ENCODE measurements at regions of chr2 and their contacts with region 1.

Region 1: DNA sequence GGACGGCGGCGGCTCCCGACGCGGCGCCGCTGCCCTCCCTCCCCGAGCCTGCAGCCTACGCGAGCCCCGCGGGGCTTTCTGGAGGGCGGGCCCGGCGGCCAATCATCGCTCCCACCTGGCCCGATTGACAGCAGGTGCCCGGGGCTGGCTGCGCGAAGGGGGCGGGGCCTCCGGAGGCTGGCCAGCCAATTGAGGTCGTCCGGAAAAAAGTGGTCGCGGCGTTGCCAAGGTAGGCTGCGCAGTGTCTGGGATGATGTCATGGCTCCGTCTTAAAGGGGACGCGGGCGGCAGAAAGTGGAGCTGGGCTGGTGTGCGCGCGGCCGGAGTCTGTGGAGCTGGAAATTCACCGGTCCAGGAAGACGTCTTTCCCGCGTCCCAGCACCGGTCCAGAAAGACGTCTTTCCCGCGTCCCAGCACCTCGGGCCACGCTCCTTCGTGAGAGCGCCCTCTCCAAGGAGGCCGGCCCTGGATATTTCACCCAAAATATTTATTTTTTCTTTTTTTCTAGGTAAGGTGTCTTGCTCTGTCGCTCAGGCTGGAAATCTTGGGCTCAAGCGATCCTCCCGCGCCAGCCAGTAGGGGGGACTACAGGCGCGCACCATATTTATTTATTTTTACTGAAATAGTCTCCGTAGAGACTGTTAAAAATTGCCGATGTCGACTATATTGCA is at the start of gene ACTR1B:
- DNase-seq: peak; percentile 98 to 99
- ATAC-seq: peak; percentile 82 to 96 (median 90)
- H3K4me3 ChIP-seq: peak within 1 kb of the TSS; percentile 93
- H3K4me3 Mint-ChIP-seq: peak within 1 kb of the TSS; percentile 93
- H3K27ac ChIP-seq: peak within 1 kb of the TSS; percentile 99
- H3K27ac Mint-ChIP-seq: peak within 1 kb of the TSS; percentile 95 to 97
- H3K4me1 ChIP-seq: peaks cover 36% of the 10 kb centered on the region
- H3K4me1 Mint-ChIP-seq: peaks cover 29 to 34% of the 10 kb centered on the region in 2 donors
- H3K27me3 ChIP-seq: no peaks in the 10 kb centered on the region
- H3K27me3 Mint-ChIP-seq: no peaks in the 10 kb centered on the region
- CTCF ChIP-seq: peak; percentile 61
- total RNA-seq, gene ACTR1B: 71.6 to 81.1 (median 73.1) TPM

Region 2: GRCh38 chr2:96927405-96928243 is 736.5 kb before region 1 on chr2:
- intact Hi-C with region 1: no loop called
- DNase-seq: no peak
- ATAC-seq: no peak
- H3K4me3 ChIP-seq: no peak overlapping the region
- H3K4me3 Mint-ChIP-seq: no peak overlapping the region
- H3K27ac ChIP-seq: no peak overlapping the region
- H3K27ac Mint-ChIP-seq: no peak overlapping the region
- H3K4me1 ChIP-seq: peaks cover 25% of the 10 kb centered on the region
- H3K4me1 Mint-ChIP-seq: peaks cover 16% of the 10 kb centered on the region in 2 donors
- H3K27me3 ChIP-seq: no peaks in the 10 kb centered on the region
- H3K27me3 Mint-ChIP-seq: peaks cover 0 to 3% of the 10 kb centered on the region in 2 donors
- CTCF ChIP-seq: no peak

Region 3: DNA sequence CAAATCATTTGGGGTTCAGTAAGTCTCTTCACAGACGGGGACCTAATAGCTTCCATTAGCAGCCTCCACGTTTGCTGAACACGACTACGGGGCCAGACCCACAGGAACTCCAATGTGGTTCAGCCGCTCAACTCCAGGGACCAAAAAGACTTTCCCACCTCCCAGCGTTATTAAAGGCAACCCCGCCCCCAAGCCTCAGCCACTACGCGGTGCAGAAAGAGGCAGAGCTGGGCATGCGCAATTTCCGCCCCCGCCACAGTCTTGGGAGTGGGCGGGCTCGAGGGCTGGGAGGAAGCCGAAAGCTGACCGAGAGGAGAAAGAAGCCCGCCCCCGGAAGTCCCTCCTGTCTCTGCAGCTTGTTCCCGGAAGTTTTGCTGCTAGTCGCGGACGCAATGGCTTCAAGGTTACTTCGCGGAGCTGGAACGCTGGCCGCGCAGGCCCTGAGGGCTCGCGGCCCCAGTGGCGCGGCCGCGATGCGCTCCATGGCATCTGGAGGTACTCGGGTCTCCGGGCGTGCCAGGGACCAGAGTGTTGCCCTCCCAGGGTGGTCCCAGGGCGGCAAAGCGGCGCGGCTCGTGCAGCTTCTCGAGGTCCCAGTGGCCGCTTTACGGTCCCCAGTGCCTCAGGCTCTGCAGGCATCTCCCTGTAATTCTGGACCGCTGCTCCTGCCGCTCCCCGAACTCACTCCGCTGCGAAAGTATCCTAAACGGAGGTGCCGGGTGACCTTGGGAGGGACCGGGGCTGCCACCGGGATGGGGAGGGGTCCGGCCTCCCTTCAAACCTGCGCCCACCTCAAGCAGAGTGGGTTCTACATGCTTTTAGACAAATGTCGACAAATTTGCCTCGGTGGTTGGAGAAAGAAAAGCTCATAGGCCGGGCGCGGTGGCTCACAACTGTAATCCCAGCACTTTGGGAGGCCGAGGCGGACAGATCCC is 18.1 kb before region 1 on chr2 and contains the start of gene COX5B:
- intact Hi-C with region 1: loop called (anchors 1 kb)
- DNase-seq: peak; percentile 95 to 99
- ATAC-seq: peak; percentile 96 to 99 (median 98)
- H3K4me3 ChIP-seq: peak within 1 kb of the TSS; percentile 68
- H3K4me3 Mint-ChIP-seq: peak within 1 kb of the TSS; percentile 96
- H3K27ac ChIP-seq: peak within 1 kb of the TSS; percentile 77
- H3K27ac Mint-ChIP-seq: peak within 1 kb of the TSS; percentile 96 to 99
- H3K4me1 ChIP-seq: peaks cover 22% of the 10 kb centered on the region
- H3K4me1 Mint-ChIP-seq: peaks cover 23 to 27% of the 10 kb centered on the region in 2 donors
- H3K27me3 ChIP-seq: no peaks in the 10 kb centered on the region
- H3K27me3 Mint-ChIP-seq: no peaks in the 10 kb centered on the region
- CTCF ChIP-seq: no peak
- total RNA-seq, gene COX5B: 101 to 126 (median 122) TPM

Region 4: GRCh38 chr2:97697252-97698235 is 33.4 kb after region 1 on chr2:
- intact Hi-C with region 1: loop called (anchors 2 kb)
- DNase-seq: peak; percentile 89 to 94
- ATAC-seq: peak; percentile 89 to 93 (median 91)
- H3K4me3 ChIP-seq: no peak overlapping the region
- H3K4me3 Mint-ChIP-seq: no peak overlapping the region
- H3K27ac ChIP-seq: no peak overlapping the region
- H3K27ac Mint-ChIP-seq: no peak overlapping the region
- H3K4me1 ChIP-seq: no peaks in the 10 kb centered on the region
- H3K4me1 Mint-ChIP-seq: peaks cover 4 to 5% of the 10 kb centered on the region in 2 donors
- H3K27me3 ChIP-seq: no peaks in the 10 kb centered on the region
- H3K27me3 Mint-ChIP-seq: peaks cover 4 to 10% of the 10 kb centered on the region in 2 donors
- CTCF ChIP-seq: peak; percentile 90

Region 5: DNA sequence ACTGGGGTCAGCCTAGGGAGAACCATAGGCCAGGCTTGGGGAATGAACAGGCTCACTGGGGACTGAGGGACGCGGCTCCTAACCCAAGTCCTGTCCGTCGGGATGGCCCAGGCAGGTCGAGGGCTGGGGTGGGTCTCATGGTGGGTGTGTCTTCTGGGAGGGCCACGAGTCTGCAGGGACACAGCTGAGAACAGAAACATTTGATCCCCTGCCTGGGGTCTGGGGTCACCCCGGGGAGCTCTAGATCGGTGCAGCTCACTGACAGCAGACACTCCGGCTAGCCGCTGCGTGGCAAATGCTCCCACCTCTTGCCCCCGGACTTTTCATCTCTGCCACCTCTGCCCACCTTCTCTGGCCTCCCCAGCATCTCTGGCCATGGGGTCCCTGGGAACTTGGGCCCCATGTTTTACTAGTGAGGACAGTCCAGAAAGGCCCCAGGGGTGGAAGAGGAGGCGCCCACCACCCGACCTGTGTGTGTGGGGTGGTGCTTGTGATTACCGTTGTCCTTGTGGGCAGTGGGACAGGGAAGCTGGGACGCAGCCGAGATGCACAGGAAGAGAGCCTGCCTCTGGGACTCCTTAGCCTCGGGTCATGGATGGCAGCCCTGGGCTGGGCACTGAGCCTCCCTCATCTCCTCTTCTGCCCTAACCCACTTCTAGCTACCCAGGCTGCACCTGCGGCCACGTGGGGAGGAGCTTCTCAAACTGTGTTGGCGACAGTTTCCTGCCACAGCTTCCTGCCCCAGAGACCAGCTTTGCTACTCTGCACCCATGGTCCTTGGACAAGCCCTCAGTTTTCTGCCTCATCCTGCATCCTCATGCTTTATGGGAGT is 54.2 kb after region 1 on chr2:
- intact Hi-C with region 1: loop called (anchors 5 kb)
- DNase-seq: peak; percentile 72 to 88
- ATAC-seq: peak; percentile 65 to 76 (median 76)
- H3K4me3 ChIP-seq: peak overlapping the region; percentile 69
- H3K4me3 Mint-ChIP-seq: peak overlapping the region; percentile 94
- H3K27ac ChIP-seq: peak overlapping the region; percentile 71
- H3K27ac Mint-ChIP-seq: peak overlapping the region; percentile 97
- H3K4me1 ChIP-seq: peaks cover 87% of the 10 kb centered on the region
- H3K4me1 Mint-ChIP-seq: peaks cover 89 to 91% of the 10 kb centered on the region in 2 donors
- H3K27me3 ChIP-seq: no peaks in the 10 kb centered on the region
- H3K27me3 Mint-ChIP-seq: no peaks in the 10 kb centered on the region
- CTCF ChIP-seq: no peak

Region 6: DNA sequence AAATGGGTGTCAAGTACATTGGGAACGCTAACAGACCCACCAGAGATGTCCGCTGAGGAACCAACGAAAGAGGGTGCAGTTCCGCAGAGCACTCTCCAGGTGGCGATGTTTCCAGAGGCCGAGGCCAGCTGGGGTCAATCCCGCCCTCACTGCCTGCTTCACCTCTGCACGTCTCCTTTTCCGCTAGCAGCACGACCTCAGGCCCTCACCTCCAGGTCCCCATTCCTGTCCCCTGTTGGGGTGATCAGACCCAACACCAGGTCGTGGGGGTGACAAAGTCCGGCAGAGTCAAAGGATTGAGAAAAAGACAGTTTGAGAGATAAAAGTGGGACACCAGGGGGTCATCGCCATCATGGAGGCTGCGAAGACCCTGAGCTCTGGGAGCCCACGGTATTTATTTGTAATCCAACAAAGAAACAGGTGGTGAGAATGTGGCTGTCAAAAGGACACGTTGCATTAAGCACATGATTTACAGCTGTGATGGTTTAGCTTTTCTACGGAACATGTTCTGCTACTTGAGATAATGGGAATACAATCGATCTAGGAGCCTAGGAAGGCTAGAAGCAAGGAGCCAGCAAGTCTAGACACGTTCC is 76.6 kb after region 1 on chr2:
- intact Hi-C with region 1: loop called (anchors 5 kb)
- DNase-seq: peak; percentile 50 to 71
- ATAC-seq: peak; percentile 49 to 63 (median 55)
- H3K4me3 ChIP-seq: no peak overlapping the region
- H3K4me3 Mint-ChIP-seq: peak overlapping the region; percentile 65
- H3K27ac ChIP-seq: peak overlapping the region; percentile 86
- H3K27ac Mint-ChIP-seq: peak overlapping the region; percentile 80 to 94
- H3K4me1 ChIP-seq: peaks cover 77% of the 10 kb centered on the region
- H3K4me1 Mint-ChIP-seq: peaks cover 74 to 82% of the 10 kb centered on the region in 2 donors
- H3K27me3 ChIP-seq: no peaks in the 10 kb centered on the region
- H3K27me3 Mint-ChIP-seq: no peaks in the 10 kb centered on the region
- CTCF ChIP-seq: peak; percentile 83

Region 7: DNA sequence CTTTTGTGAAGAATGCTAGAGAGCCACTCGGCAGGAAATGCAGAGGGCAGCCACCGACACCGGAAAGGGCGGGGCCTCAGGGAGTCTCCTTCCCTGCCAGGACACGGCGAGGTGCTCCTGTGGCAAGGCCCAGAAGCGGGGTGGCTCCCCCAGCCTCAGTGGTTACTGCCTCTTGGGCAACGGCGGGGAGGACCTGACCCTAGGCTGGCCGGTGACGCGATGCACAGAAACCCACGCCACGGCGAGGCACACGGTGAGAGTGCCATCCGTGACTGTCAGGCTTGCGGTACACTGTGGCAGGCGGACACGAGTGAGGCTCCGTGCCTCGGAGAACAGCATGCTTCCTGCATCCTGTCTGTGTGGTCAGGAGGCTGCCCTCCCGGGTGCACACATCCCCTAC is 97.1 kb after region 1 on chr2:
- intact Hi-C with region 1: no loop called
- DNase-seq: peak; percentile 31 to 67
- ATAC-seq: peak; percentile 77 to 84 (median 78)
- H3K4me3 ChIP-seq: peak overlapping the region; percentile 11
- H3K4me3 Mint-ChIP-seq: peak overlapping the region; percentile 69
- H3K27ac ChIP-seq: peak overlapping the region; percentile 71
- H3K27ac Mint-ChIP-seq: peak overlapping the region; percentile 84 to 87
- H3K4me1 ChIP-seq: peaks cover 40% of the 10 kb centered on the region
- H3K4me1 Mint-ChIP-seq: peaks cover 37 to 45% of the 10 kb centered on the region in 2 donors
- H3K27me3 ChIP-seq: no peaks in the 10 kb centered on the region
- H3K27me3 Mint-ChIP-seq: no peaks in the 10 kb centered on the region
- CTCF ChIP-seq: no peak

Region 8: DNA sequence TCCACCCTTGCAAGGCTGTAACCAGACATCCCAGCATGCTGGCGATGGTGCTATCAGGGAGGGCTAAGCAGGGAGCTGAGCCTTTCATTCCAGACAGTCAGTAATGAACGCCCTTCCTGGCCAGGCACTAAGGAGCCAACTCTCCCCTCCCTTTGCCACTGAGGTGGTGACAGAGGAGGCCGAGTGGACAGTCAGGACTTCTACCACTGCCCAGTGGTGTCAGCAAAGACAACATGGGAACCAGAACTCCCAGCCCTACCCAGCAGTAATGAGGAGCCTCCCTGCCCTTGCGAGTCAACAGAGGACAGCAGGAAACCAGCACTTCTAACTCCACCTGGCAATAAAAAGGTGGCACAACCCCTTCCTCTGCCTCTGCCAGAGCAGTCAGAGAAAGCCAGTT is 117.9 kb after region 1 on chr2:
- intact Hi-C with region 1: no loop called
- DNase-seq: no peak
- ATAC-seq: no peak
- H3K4me3 ChIP-seq: no peak overlapping the region
- H3K4me3 Mint-ChIP-seq: no peak overlapping the region
- H3K27ac ChIP-seq: no peak overlapping the region
- H3K27ac Mint-ChIP-seq: no peak overlapping the region
- H3K4me1 ChIP-seq: no peaks in the 10 kb centered on the region
- H3K4me1 Mint-ChIP-seq: peaks cover 0 to 8% of the 10 kb centered on the region in 2 donors
- H3K27me3 ChIP-seq: no peaks in the 10 kb centered on the region
- H3K27me3 Mint-ChIP-seq: no peaks in the 10 kb centered on the region
- CTCF ChIP-seq: no peak

Measured in natural killer cell (primary cell).